ENCODE measurements at regions of chr15 and their contacts with region 1.

Region 1: GRCh38 chr15:31391687-31392671 is 65.3 kb downstream of the KLF13 start:
- DNase-seq: peak; percentile 96
- H3K4me3 ChIP-seq: peak overlapping the region; percentile 33 to 82 (median 68)
- H3K27ac ChIP-seq: peak overlapping the region; percentile 63 to 95 (median 92)
- H3K4me1 ChIP-seq: peaks cover 0 to 59% (median 26%) of the 10 kb centered on the region in 6 donors
- H3K27me3 ChIP-seq: peaks cover 0 to 26% (median 0%) of the 10 kb centered on the region in 7 donors
- CTCF ChIP-seq: no peak
- POLR2A ChIP-seq: peak; percentile 51 to 72 (median 55)

Region 2: DNA sequence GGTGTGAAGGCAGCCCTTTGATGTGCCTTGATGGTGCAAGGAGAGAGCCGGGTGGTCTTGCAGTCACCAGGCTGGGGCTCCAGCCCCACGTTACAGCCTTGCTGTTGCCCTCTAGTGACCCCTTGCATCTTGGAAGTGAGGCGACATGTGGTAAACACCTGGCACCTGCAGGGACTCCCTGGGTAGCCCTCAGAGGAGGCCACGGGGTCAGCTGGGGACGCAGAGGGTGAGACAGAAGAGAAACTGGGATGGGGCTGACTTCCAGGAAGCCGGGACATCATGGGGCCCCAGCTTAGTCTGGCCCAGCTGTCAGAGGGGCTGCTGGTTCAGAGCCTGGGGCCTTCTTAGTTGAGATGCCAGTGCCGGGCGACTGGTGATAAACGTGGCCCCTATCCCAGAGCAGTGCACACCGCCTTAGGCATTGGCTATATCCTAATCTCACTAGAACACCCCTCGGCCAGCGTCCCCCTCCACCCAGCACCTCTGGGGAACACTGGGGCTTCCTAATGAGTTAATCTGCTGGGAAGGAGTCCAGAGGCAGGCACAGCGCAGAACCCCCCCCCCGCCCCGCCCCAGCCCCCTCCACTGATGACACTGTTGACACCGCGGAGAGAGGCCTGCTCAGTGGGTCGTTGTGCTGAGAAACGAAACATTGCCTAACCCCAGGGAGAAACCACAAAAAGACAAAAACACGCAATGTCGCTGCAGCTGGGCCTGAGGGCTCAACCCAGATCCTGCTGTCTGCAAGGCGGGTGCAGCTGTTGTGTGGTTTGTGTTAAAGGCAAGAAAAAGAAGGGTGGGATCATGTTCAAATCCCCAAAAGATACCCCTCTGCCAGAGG is 125.9 kb before region 1 on chr15:
- intact Hi-C with region 1: no loop called
- DNase-seq: peak; percentile 92
- H3K4me3 ChIP-seq: peak overlapping the region in 1 of 8 donors; percentile 59
- H3K27ac ChIP-seq: peak overlapping the region; percentile 53 to 98 (median 93)
- H3K4me1 ChIP-seq: peaks cover 2 to 100% (median 72%) of the 10 kb centered on the region in 6 donors
- H3K27me3 ChIP-seq: no peaks in the 10 kb centered on the region
- CTCF ChIP-seq: peak in 1 of 11 experiments; percentile 17
- POLR2A ChIP-seq: peak in 1 of 3 donors; percentile 16

Region 3: DNA sequence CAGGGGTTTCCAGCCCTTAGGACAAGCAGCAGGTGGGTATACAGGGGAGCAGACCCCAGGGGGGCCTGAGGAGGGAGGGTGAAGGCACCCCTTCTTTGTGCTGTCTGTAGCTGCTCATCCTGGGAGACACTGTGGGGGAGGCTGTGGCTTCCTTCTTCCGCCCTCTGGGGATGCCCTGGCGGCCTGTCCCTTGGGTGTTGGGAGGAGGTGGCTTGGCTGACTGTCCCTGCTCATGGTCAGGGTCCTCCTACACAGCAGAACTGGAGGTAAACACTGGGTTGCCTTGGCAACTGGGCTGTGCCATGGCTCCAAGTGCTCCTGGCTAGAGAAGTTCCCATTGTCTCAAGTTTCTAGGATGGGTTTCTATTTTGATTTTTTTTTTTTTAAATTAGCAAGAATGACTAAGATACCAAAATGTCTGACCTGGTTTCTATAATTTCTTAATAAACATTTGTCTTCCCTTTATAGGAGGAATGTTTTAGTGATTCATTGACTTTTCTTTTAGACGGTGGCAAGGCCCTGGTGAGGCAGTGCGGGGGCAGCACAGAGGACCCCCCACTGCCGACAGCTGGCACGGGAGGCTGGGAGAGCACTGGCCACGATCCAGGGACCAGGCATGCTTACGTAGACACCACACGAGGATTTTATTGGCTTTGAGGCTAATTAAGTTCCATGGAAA is 53.0 kb before region 1 on chr15:
- intact Hi-C with region 1: loop called (anchors 10 kb)
- DNase-seq: peak; percentile 83
- H3K4me3 ChIP-seq: peak overlapping the region in 1 of 8 donors; percentile 40
- H3K27ac ChIP-seq: peak overlapping the region in 7 of 8 donors; percentile 37 to 100 (median 96)
- H3K4me1 ChIP-seq: peaks cover 39 to 100% (median 99%) of the 10 kb centered on the region in 6 donors
- H3K27me3 ChIP-seq: no peaks in the 10 kb centered on the region
- CTCF ChIP-seq: no peak
- POLR2A ChIP-seq: no peak

Region 4: GRCh38 chr15:31571671-31572070 is 179.7 kb after region 1 on chr15:
- intact Hi-C with region 1: no loop called
- DNase-seq: no peak
- H3K4me3 ChIP-seq: no peak overlapping the region
- H3K27ac ChIP-seq: no peak overlapping the region
- H3K4me1 ChIP-seq: no peaks in the 10 kb centered on the region
- H3K27me3 ChIP-seq: no peaks in the 10 kb centered on the region
- CTCF ChIP-seq: no peak
- POLR2A ChIP-seq: no peak